ENCODE measurements at regions of chr15 and their contacts with region 1.

Region 1: DNA sequence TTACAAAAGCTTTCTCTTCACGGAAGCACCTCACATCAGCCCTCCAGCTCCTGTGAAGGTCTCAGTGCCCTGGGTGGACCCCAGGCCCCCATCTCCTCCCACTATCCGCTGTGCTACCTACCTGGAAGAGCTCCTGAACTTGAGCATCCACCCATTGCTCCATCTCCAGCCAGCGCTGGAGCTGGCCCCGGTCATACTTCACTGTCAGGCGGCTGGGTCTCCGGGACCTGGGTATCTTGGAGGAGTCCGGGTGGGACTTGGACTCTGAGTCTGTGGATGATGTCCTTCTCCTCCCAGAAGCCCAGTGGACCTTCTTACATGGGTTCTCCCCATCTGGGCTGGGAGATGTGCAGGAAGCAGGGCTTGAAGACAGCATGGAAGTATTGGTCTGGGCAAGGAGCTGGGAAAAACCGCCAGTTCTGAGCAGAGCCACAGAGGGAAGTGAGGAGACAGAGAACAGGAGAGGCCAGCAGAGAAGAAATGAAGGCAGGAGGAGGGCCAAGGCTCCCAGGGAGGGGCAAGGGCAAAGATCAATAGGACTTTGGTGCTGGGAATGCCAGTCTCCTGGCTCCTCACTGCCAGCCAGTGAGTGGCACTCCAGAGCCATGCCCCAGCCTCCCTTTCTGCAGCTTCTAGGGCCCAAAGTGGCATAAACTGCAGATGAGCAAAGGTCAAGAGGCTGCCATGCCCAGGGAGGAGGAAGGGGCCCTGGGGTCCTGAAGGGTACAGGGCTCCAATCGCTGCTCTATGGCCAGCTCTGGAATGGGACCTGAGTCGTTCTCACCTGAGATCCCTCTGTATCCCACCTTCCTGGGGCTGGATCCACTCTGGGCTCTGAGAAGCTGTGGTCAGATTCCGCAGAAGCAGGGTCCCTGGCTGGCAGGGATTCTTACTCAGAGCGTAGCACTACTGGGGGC is at the start of gene PPP1R14D:
- DNase-seq: no peak
- ATAC-seq: no peak
- H3K4me3 ChIP-seq: no peak within 1 kb of the TSS
- H3K27ac ChIP-seq: no peak within 1 kb of the TSS
- H3K4me1 ChIP-seq: peaks cover 38% of the 10 kb centered on the region
- H3K27me3 ChIP-seq: no peaks in the 10 kb centered on the region
- CTCF ChIP-seq: no peak
- total RNA-seq, gene PPP1R14D: 0.33 TPM in 1 of 2 replicates, not detected in the other

Region 2: GRCh38 chr15:40886586-40886985 is 58.1 kb after region 1 on chr15:
- CTCF ChIA-PET with region 1: no interaction called
- POLR2A ChIA-PET with region 1: interaction called, 11 read pairs
- intact Hi-C with region 1: no loop called
- DNase-seq: no peak
- ATAC-seq: no peak
- H3K4me3 ChIP-seq: no peak overlapping the region
- H3K27ac ChIP-seq: no peak overlapping the region
- H3K4me1 ChIP-seq: peaks cover 1% of the 10 kb centered on the region; the same call in 1 of the 2 replicates
- H3K27me3 ChIP-seq: no peaks in the 10 kb centered on the region
- CTCF ChIP-seq: no peak

Measured in PC-3 (cell line).